Sigmoid colon (tissue), 7 donors: ENCODE measurements at regions of chr6 and their contacts with region 1.

Region 1: DNA sequence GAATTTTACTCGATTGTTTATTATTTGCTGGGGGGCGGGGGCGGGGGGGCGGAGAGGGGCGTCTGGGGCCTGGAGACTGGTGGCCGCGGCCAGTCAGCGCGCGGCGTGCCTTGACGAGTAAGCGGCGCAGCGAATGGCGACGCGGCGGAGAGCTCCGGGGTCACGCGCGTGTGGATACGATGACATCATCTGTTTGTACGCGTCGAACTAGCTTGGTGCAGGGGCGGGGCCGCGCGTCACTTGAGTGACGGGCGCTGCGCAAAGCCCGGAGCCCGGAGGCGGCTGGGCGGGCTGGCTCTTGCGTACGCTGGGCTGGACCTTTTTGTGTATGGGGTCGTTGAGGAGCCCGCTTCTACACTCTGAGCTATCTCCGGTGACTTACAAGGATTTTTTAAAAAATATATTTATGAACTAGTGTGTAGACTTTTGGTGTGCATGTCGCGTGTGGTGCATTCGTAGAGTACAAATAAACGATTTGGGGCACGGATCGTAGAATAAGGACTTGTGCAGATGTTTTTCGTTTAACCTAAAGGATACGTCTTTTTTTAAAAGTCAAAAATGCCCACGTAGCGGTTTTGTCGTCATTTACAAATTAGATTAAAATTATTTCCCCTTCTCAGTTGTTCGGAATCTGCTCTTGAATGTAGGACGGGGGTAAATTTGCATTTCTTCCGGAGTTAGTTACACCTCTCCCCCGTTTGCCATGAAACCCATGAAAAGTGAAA is 2.2 kb upstream of the FOXO3 start:
- DNase-seq: peak; percentile 99
- H3K4me3 ChIP-seq: peak overlapping the region; percentile 74 to 93 (median 82)
- H3K27ac ChIP-seq: peak overlapping the region; percentile 96 to 100 (median 99)
- H3K4me1 ChIP-seq: peaks cover 2 to 35% (median 30%) of the 10 kb centered on the region in 4 donors
- H3K27me3 ChIP-seq: no peaks in the 10 kb centered on the region
- CTCF ChIP-seq: no peak
- EP300 ChIP-seq: peak in 3 of 4 donors; percentile 52 to 85 (median 77)
- POLR2A ChIP-seq: peak; percentile 31 to 57

Region 2: DNA sequence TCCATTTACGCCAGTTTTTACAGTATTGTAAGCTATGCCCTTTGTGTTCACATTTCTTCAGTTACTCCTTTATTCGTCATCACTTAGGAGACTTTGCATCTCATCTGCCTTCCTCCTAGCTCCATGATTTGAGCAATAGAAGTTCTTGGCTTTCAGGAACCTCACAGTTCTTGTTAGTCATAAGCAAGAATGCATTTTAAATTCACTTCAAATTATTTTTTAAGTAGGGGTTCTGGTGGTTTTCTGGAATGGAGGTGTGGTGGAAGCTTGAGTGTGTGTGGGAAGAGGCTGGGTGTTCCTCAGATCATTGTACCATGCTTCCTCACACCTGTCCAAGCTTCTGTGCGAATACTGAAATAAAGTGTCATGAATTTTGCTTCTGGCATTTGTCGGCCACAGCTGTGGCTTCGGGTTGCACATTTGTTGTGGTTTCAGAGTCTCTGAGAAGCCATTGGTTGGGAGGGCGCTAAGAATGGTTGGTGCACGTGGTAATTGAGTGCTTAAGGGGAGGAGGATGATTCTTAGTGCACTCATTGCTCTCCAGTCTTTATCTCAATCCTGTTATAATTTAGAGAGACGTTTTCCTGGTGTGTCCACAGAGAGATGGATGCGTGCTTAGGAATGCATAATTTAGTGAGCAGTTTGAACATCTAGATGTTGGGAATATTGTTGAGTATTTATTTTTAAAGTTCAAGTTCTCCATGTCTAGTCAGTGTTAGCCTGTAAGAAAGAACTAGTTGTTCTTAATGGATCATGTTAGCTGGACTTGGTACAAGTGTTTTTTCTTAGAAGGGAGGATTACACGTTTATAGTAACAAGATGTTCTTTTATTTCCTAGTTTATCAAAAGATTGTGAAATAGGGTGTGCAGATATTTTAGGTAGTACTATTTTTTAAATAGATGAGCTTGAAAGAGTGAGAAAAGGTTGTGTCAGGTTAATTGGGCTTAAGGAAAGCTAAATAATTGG is 34.1 kb after region 1 on chr6:
- intact Hi-C with region 1: loop called (anchors 5 kb)
- DNase-seq: peak; percentile 81
- H3K4me3 ChIP-seq: no peak overlapping the region
- H3K27ac ChIP-seq: peak overlapping the region; percentile 81 to 90 (median 86)
- H3K4me1 ChIP-seq: peaks cover 2 to 100% (median 98%) of the 10 kb centered on the region in 4 donors
- H3K27me3 ChIP-seq: no peaks in the 10 kb centered on the region
- CTCF ChIP-seq: no peak
- EP300 ChIP-seq: peak in 2 of 4 donors; percentile 74 to 90
- POLR2A ChIP-seq: no peak

Region 3: DNA sequence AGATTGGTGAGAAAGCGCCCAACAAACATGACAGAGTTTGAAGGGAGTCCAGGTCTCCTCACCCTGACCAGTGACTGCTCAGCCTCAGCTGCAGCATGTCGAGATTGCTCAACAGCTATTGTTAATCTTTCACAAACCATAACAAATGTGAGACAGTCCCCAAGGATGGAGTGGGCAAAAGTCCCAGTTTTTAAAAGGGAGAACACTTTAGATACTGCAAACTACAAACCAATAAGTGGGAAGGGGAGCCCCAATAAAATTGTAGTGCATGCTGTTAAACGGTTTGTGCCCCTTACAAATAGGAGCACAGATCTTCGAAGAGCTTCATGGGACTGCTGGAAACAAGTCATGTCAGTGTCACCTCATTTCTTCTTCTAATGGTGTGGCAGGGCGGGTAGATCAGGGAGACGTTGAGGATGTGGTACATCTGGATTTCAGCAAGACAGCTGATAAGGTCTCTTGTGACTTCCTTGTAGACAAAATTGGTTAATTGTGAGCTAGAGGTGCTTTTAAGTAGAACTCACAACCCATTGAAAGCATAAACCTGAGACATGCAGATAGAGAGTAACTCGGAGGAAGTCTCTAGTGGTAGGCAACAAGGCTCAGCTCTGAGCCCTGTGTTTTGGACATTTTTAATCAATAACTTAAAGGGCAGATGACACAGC is 155.7 kb after region 1 on chr6:
- intact Hi-C with region 1: loop called (anchors 5 kb)
- DNase-seq: peak; percentile 79
- H3K4me3 ChIP-seq: no peak overlapping the region
- H3K27ac ChIP-seq: peak overlapping the region in 1 of 4 donors; percentile 46
- H3K4me1 ChIP-seq: peaks cover 0 to 56% (median 49%) of the 10 kb centered on the region in 4 donors
- H3K27me3 ChIP-seq: no peaks in the 10 kb centered on the region
- CTCF ChIP-seq: no peak
- EP300 ChIP-seq: no peak
- POLR2A ChIP-seq: no peak

Region 4: DNA sequence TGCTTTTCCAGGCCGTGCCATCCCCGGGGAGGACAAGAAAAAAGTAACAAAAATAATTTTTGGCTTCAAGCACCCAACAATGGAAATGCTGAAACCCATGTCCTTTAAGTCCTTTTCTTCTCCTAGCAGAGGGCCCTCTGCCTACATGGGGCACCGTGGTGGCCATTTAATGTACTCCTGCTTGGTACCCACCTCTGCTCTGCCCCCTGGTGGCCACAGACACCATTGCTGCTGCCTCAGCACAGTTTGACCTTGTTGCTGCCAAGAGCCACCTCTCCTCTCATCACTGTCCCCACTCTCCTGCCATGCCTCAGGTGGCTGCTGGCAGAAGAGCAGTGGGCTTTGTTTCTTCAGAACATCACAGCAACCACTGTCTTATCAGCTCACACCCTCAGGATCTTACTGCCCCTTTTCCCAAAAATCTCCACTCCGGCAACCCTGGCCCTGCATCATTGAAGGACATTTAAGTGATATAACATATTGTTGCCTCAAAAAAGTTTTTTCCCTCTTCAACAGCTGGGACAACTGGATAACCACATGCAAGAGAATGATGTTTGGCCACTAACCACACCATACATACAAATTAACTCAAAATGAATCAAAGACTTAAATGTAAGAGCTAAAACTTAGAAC is 276.8 kb after region 1 on chr6:
- intact Hi-C with region 1: loop called (anchors 5 kb)
- DNase-seq: peak; percentile 94
- H3K4me3 ChIP-seq: no peak overlapping the region
- H3K27ac ChIP-seq: no peak overlapping the region
- H3K4me1 ChIP-seq: peaks cover 0 to 15% (median 0%) of the 10 kb centered on the region in 4 donors
- H3K27me3 ChIP-seq: no peaks in the 10 kb centered on the region
- CTCF ChIP-seq: peak; percentile 91 to 99 (median 95)
- EP300 ChIP-seq: no peak
- POLR2A ChIP-seq: no peak

Region 5: GRCh38 chr6:109009236-109009961 is 450.9 kb after region 1 on chr6:
- intact Hi-C with region 1: loop called (anchors 5 kb)
- DNase-seq: peak; percentile 97
- H3K4me3 ChIP-seq: peak overlapping the region; percentile 93 to 98 (median 97)
- H3K27ac ChIP-seq: peak overlapping the region; percentile 92 to 98 (median 96)
- H3K4me1 ChIP-seq: peaks cover 0 to 47% (median 35%) of the 10 kb centered on the region in 4 donors
- H3K27me3 ChIP-seq: no peaks in the 10 kb centered on the region
- CTCF ChIP-seq: peak in 1 of 4 experiments; percentile 27
- EP300 ChIP-seq: no peak
- POLR2A ChIP-seq: peak; percentile 59 to 63

Region 6: DNA sequence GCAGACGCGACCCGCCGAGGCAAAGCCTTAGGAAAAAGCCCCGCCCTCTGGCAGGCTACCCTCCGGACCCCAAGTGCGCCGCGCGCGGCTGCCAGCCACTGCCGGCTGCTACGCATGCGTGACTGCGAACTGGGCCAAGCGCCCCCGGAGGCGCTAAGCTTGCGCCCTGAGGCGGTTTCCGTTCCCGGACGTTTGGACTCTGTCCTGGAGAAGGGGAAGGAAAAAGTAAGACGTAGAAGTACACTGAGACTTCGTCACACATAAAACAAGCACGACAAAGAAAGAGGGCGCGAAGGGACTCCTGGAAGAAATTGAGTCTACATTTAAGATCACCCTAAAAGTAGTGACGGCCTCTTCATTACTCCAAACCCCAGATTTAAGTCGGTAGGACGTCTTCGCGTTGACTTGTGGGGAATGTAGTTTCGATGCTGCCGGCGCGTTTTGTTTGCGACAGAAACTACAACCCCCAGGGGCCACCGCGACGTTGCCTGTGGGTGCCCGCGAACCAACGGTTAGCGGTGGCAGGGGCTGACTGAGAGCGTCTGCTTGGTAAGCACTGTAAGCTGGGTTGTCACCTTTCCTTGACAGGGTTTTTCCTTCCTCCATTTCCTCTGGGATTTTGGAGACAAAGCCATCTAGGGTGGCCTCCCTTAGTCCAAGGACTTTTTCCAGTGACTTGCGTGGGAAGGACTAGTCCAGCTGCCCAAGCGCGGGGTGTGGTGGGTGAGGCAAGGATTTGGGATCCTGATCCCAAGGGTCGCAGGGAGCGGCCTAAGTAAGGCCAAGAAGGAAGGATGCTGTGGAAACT is 536.7 kb after region 1 on chr6 and contains the start of gene CEP57L1:
- intact Hi-C with region 1: loop called (anchors 1 kb)
- DNase-seq: peak; percentile 99
- H3K4me3 ChIP-seq: peak within 1 kb of the TSS; percentile 71 to 77 (median 74)
- H3K27ac ChIP-seq: peak within 1 kb of the TSS; percentile 97 to 99 (median 98)
- H3K4me1 ChIP-seq: peaks cover 0 to 38% (median 26%) of the 10 kb centered on the region in 4 donors
- H3K27me3 ChIP-seq: no peaks in the 10 kb centered on the region
- CTCF ChIP-seq: no peak
- EP300 ChIP-seq: peak in 1 of 4 donors; percentile 19
- POLR2A ChIP-seq: peak; percentile 23 to 65
- total RNA-seq, gene CEP57L1: 12.6 to 21.0 (median 16.5) TPM